Heart left ventricle (tissue), 16 donors: ENCODE measurements at regions of chr14 and their contacts with region 1.

Region 1: GRCh38 chr14:102524466-102525218 is 15.1 kb upstream of the ANKRD9 start:
- DNase-seq: peak; percentile 99 to 100 (median 100)
- ATAC-seq: peak; percentile 97 to 99 (median 99)
- H3K4me3 ChIP-seq: peak overlapping the region; percentile 38 to 73 (median 63)
- H3K27ac ChIP-seq: peak overlapping the region; percentile 63 to 89 (median 81)
- H3K4me1 ChIP-seq: peaks cover 0 to 28% (median 8%) of the 10 kb centered on the region in 12 donors
- H3K27me3 ChIP-seq: no peaks in the 10 kb centered on the region
- CTCF ChIP-seq: peak; percentile 97 to 100 (median 99)
- POLR2A ChIP-seq: peak in 1 of 2 donors; percentile 70

Region 2: DNA sequence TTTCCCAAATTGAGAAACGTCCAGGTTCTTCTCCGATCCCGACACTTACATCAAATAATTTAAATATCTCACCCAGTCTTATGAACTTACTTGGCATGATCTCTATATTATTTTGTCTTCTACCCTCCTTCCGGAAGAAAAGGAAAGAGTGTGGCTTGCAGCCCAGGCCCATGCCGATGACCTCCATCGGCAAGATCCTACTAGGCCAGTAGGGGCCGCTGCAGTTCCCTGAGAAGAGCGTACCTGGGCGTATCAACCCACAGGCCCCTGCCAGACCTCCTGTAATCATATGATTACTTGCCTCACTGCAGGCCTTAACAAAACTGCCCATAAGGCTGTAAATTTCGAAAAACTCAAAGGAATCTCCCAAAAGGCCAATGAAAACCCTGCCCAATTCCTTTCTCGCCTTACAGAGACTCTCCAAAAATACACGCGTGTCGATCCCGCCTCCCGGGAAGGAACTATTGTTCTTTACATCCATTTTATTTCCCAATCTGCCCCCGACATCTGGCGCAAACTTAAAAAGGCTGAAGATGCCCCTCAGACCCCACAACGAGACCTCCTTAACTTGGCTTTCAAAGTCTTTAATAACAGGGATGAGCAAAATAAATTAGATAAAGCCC is 289.3 kb before region 1 on chr14:
- intact Hi-C with region 1: loop called in 1 of 10 experiments (anchors 10 kb)
- DNase-seq: peak; percentile 82 to 90 (median 85)
- ATAC-seq: peak; percentile 88 to 96 (median 94)
- H3K4me3 ChIP-seq: peak overlapping the region in 10 of 12 donors; percentile 25 to 58 (median 45)
- H3K27ac ChIP-seq: peak overlapping the region in 5 of 12 donors; percentile 12 to 46 (median 17)
- H3K4me1 ChIP-seq: peaks cover 0 to 9% (median 2%) of the 10 kb centered on the region in 12 donors
- H3K27me3 ChIP-seq: no peaks in the 10 kb centered on the region
- CTCF ChIP-seq: peak; percentile 81 to 91 (median 88)
- POLR2A ChIP-seq: no peak

Region 3: GRCh38 chr14:102481791-102482238 is 42.8 kb before region 1 on chr14:
- intact Hi-C with region 1: no loop called
- DNase-seq: no peak
- ATAC-seq: no peak
- H3K4me3 ChIP-seq: no peak overlapping the region
- H3K27ac ChIP-seq: no peak overlapping the region
- H3K4me1 ChIP-seq: peaks cover 0 to 16% (median 8%) of the 10 kb centered on the region in 12 donors
- H3K27me3 ChIP-seq: no peaks in the 10 kb centered on the region
- CTCF ChIP-seq: no peak
- POLR2A ChIP-seq: no peak

Region 4: DNA sequence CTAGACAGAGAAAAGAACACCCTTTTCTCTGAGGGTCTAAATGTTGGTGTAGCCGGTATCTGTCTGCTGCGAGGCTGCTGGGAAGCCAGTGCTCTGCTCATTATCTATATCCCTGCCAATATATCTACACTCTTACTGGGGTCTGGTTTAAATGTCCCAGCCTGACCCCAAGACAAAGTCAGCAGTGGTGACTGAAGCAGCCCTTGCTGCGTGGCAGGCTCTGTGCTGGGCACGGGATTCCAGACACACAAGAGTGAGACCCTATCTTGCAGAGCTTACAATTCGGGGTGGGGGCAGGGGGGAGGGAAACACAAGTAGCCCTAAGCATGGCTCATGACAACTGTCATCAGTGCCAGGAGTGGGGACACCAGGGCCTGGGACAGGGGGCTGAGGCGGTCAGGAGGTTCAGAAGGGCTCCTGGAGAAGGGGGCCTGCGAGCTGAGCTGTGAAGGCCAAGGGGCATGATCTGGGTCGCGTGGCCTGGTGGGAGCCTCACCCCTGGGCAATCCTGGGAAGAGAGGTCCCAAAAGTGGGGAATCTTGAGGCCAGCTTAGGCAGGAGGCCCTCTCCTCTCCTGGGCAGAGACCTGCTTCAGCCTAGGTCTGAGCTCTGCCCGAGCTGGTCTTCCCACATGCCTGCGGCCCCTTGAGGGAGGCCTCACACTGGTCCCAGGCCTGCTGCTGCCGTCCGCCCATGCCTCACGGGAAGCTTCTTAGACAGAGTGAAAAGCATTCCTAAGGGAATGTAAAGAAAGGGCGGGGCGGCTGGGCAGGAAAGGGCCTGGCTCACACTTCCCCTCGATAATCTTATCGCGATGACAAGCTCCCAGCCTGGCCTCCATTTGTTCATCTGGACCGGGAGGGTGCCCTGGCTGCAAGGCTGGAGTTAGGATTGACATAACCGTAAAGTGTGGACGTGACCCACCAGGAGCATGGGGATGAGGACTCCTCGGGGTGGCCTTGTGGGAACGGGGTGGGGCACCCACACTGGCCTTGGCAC is 60.5 kb after region 1 on chr14:
- intact Hi-C with region 1: loop called in 7 of 10 experiments (anchors 2 to 10 kb)
- DNase-seq: no peak
- ATAC-seq: peak in 1 of 4 donors; percentile 33
- H3K4me3 ChIP-seq: no peak overlapping the region
- H3K27ac ChIP-seq: no peak overlapping the region
- H3K4me1 ChIP-seq: peaks cover 0 to 1% (median 0%) of the 10 kb centered on the region in 12 donors
- H3K27me3 ChIP-seq: peaks cover 0 to 4% (median 0%) of the 10 kb centered on the region in 9 donors
- CTCF ChIP-seq: no peak
- POLR2A ChIP-seq: no peak

Region 5: DNA sequence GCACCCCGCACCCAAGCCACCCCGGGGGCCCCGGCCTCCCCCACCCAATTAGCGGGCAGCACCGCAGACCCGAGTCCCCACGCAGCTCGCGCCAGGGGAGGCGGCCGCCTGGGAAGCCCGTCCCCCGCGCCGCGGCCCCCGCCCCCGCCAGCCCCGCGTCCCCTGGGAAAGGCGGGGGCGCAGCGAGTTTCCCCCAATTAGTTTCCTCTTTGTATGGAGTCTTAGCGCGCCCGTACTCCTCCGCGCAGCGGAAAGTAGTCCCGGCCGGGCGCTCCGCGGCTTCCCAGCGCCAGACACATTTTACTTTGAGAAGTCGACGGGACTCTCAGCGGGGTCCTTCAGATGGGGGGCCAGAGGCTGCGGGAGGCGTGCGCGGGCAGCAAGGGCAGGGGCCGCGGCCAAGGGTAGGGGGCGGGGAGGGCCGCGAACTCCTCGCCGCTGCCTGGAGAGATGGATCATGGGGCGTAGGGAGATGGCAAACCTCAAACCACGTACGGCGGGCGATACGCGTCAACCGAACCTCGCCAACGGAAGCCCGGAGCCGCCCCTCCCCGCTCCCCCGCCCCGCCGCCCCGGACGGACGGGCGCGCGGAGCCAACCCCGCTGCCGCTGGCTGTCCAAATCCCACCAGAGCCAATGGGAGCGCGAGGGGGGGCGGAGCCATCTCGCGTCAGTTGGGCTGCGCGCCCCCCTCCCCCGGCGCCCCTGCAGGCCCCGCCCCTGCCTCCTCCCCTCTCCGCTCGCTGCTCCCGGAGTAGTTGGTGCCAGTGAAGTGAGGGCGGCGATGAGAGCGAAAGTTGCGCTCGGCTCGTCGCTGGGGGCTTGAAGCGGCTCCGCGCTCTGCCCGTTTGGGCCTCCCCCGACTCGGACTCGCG is 67.5 kb after region 1 on chr14 and contains the start of gene RCOR1:
- intact Hi-C with region 1: loop called in 9 of 10 experiments (anchors 1 to 10 kb)
- DNase-seq: peak; percentile 98 to 99 (median 99)
- ATAC-seq: peak; percentile 93 to 96 (median 95)
- H3K4me3 ChIP-seq: peak within 1 kb of the TSS; percentile 73 to 99 (median 92)
- H3K27ac ChIP-seq: peak within 1 kb of the TSS; percentile 97 to 99 (median 98)
- H3K4me1 ChIP-seq: peaks cover 5 to 28% (median 20%) of the 10 kb centered on the region in 12 donors
- H3K27me3 ChIP-seq: no peaks in the 10 kb centered on the region
- CTCF ChIP-seq: no peak
- POLR2A ChIP-seq: peak in 1 of 2 donors; percentile 58
- total RNA-seq, gene RCOR1: 8.5 to 20.9 (median 12.8) TPM

Region 6: DNA sequence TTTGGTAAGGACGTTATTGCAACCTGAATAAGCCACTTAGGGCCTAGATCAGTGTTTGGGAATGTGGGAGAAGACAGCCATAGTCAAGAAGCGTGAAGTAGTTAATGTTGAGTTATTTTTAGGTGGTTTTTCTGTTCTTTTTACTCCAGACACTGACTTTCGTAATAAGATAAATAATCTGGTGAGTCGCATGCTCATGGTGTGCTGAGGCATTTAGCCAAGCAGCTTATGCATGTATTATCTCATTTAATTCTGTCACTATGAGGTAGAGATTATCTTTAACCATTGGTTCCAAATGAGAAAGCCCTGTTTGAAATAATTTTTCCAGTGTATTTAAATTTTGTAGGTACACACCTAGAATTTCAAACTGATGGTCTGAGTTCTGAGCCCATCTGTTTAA is 135.2 kb after region 1 on chr14:
- intact Hi-C with region 1: no loop called
- DNase-seq: no peak
- ATAC-seq: no peak
- H3K4me3 ChIP-seq: no peak overlapping the region
- H3K27ac ChIP-seq: no peak overlapping the region
- H3K4me1 ChIP-seq: peaks cover 0 to 14% (median 2%) of the 10 kb centered on the region in 12 donors
- H3K27me3 ChIP-seq: no peaks in the 10 kb centered on the region
- CTCF ChIP-seq: no peak
- POLR2A ChIP-seq: no peak

Region 7: DNA sequence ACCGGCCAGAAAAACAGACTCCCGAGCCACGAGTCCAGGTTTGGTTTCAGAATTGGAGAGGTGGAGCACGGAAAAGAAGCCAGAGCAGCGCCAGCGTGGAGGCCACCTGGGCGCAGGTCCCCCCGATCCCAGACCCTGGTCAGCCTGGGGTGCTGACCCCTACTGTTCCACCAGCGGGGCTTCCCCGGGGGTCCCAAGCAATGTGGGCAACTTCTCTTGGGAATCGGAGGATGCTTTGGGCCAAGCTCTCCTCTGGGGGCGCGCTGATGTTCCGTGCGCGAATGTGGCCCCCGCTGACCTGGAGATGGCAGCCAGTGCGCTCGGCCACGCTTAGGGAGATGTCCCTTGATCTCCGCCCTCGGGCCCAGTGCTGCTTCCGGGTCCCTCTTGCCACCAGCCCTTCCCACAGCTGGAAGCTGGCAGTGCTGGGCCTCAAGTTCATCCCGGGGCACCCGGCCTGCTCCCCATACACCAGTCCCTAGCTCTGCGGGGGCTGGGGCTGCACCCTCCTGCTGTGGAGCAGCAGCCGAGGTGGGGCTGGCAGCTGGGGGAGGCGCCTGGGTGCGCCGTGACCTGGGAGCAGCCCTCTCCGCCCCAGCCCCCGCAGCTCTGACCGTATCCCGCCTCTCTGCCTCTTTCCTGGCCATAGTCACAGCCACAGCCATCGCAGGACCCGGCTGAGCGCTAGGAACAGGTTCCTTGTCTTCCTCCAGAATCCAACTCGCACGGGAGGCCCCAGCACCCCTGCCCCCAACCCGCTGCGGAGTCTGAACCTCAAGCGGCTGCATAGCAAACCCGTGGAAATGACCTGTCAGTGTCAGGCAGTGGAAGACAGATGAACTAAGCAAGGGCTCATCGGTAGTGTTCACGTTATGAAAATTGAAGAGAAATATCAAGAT is 159.0 kb after region 1 on chr14:
- intact Hi-C with region 1: loop called in 1 of 10 experiments (anchors 10 kb)
- DNase-seq: no peak
- ATAC-seq: peak in 1 of 4 donors; percentile 33
- H3K4me3 ChIP-seq: no peak overlapping the region
- H3K27ac ChIP-seq: no peak overlapping the region
- H3K4me1 ChIP-seq: peaks cover 0 to 12% (median 0%) of the 10 kb centered on the region in 12 donors
- H3K27me3 ChIP-seq: no peaks in the 10 kb centered on the region
- CTCF ChIP-seq: no peak
- POLR2A ChIP-seq: no peak

Region 8: DNA sequence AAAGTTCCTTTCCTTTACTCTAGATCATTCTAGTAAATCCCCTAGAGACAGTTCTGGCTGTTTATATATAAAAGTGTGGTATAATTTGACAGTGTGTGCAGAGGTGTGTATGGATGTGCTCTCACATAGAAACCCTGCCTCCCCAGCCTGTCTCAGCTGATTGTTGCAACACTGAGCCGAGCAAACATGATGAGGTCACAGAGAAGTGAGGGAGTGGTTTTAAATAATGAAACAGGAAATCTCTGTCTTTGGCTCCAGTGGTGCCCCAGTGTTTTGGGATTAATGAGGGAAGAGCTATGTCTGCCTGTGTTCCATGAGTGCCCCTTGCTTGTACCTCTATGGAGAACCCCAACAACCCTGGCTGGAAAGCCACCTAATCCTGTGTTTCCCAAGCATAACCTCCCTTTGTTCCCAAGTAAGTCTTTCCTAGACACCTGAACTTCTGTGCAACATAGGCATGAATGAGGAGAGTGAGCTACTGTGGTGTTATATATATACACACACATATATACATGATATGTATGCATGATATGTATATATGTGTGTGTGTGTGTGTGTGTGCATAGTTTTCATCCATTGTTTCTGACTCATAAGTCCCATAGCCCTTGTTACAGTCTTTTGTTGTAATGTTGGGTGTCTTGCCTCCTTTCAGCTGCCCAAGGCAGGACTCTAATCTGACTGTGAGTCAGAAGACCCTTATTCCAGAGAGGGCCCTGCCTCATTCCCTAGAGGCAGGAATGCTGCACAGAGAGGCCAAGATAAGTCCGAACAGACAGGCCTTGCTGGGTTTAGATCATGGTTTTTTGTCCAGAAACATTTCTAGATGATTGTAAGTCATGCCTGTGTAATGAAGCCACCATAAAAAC is 270.7 kb after region 1 on chr14:
- intact Hi-C with region 1: no loop called
- DNase-seq: peak in 4 of 5 donors; percentile 31 to 70 (median 36)
- ATAC-seq: peak in 3 of 4 donors; percentile 79 to 90 (median 87)
- H3K4me3 ChIP-seq: no peak overlapping the region
- H3K27ac ChIP-seq: peak overlapping the region in 1 of 12 donors; percentile 67
- H3K4me1 ChIP-seq: peaks cover 0 to 19% (median 3%) of the 10 kb centered on the region in 12 donors
- H3K27me3 ChIP-seq: no peaks in the 10 kb centered on the region
- CTCF ChIP-seq: no peak
- POLR2A ChIP-seq: no peak

Region 9: DNA sequence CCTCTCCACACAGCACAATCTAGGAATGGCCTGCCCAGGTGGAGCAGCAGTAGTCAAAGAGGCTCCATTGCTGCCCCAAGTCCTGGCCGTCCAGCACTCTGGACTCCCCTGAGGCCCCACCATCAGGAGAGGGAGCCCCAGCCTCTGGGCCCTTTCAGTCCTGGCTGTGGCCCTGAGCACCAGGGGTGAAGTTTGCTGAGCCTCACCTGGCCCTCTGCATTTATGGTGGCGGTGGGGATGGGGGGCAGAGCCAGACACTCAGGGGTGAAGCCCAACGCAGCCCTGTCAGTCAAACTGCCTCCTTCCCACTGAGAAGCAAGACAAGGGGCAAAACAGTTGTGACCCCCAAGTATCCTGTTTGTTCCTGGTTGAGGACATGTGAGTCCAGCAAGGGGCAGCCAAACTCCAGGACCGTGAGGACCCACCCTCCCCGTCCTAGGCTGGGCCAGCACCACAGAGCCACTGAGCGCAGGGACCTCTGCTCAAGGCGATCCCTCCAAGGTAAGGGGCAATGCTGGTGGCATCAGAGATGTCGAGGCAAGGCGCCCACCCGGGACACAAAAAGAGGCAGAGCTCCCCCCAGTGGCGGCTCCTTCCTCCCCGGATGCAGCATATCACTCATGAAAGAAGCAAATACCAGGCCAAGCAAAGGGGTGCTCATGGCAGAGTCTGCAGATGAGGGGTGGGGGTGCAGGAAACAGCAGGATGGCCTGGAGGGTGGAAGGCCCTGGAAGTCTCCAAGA is 393.0 kb after region 1 on chr14:
- intact Hi-C with region 1: loop called in 2 of 10 experiments (anchors 10 kb)
- DNase-seq: peak in 1 of 5 donors; percentile 67
- ATAC-seq: peak in 2 of 4 donors; percentile 45 to 50
- H3K4me3 ChIP-seq: no peak overlapping the region
- H3K27ac ChIP-seq: no peak overlapping the region
- H3K4me1 ChIP-seq: peaks cover 0 to 2% (median 0%) of the 10 kb centered on the region in 12 donors
- H3K27me3 ChIP-seq: peaks cover under 1 to 10% (median 7%) of the 10 kb centered on the region in 9 donors
- CTCF ChIP-seq: peak; percentile 44 to 68 (median 57)
- POLR2A ChIP-seq: no peak